Mucosa of descending colon (tissue), 3 donors: ENCODE measurements at regions of chr7 and their contacts with region 1.

Region 1: DNA sequence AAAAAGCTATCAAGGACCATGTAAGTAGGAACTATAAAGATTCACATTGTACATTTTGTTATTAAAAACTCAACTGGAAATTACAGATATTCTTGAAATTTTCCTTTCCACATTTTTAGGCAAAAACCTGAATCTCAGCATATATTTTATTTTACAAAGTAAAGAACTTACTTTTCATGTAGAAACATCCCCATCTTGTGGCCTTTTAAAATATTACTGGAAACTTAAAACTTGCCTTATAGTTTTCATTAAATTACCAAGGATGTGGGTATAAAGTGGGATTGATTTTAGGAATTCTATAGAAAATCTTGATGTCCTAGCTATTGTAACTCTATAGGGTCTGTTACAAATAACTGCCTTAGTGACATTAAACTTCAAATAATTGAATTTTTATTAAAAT is 10.6 kb downstream of the DBF4 start:
- DNase-seq: no peak
- ATAC-seq: no peak
- H3K4me3 ChIP-seq: no peak overlapping the region
- H3K4me1 ChIP-seq: no peaks in the 10 kb centered on the region
- CTCF ChIP-seq: no peak

Region 2: DNA sequence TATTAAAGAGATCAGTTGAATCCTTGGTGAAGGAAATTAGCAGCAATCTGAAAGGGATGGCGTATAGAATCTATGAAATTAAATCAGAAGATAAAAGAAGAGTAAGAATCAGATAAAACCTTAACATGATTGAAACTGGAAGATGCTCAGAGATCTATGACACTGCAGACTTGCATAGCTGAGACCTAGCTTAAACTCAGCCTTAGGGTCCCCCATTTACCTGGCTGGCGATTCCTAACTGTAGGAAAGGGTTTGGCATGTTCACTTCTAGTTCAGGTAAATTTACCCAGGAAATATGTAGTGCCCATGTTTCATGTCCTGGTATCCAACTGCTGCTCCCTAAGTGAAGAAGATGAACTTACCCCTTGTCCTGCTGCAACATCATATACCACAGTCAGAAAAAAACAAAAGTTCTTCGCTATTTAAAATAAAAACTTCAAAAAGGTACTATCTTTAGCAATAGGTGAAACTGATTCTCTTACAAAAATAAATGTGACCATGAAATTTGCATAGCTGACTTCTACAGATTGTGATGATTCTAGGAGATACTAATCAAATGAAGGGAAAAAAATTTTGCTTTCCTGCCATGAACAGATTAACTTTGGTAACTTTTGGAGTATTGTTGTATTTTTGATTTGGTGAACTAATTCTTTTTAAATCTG is 619.5 kb before region 1 on chr7:
- intact Hi-C with region 1: no loop called
- DNase-seq: no peak
- ATAC-seq: no peak
- H3K4me3 ChIP-seq: no peak overlapping the region
- H3K4me1 ChIP-seq: no peaks in the 10 kb centered on the region
- CTCF ChIP-seq: no peak

Region 3: GRCh38 chr7:87506246-87507180 is 380.4 kb before region 1 on chr7:
- intact Hi-C with region 1: loop called in 1 of 2 experiments (anchors 10 kb)
- DNase-seq: no peak
- ATAC-seq: no peak
- H3K4me3 ChIP-seq: no peak overlapping the region
- H3K4me1 ChIP-seq: no peaks in the 10 kb centered on the region
- CTCF ChIP-seq: no peak

Region 4: GRCh38 chr7:87615197-87615596 is 271.7 kb before region 1 on chr7:
- intact Hi-C with region 1: no loop called
- DNase-seq: no peak
- ATAC-seq: no peak
- H3K4me3 ChIP-seq: no peak overlapping the region
- H3K4me1 ChIP-seq: no peaks in the 10 kb centered on the region
- CTCF ChIP-seq: no peak

Region 5: DNA sequence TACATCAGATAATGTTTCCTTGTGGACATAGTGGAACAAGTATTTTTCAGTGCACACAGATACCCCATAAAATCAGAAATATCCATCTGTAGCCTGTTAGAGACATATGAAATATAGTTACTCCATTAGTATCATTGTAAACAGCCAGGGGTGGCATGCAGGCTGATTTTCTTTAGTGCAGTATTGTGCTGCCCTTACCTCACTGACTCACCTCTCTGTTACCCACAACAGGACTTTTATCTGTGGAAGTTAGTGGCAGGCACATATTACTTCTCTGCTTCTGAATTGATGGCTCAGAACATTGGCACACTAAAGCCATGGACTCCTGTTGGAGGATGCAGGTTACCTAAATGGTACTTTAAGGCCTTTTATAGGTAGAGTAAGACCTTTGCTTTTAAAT is 80.7 kb before region 1 on chr7:
- intact Hi-C with region 1: loop called in 1 of 2 experiments (anchors 10 kb)
- DNase-seq: no peak
- ATAC-seq: no peak
- H3K4me3 ChIP-seq: no peak overlapping the region
- H3K4me1 ChIP-seq: no peaks in the 10 kb centered on the region
- CTCF ChIP-seq: no peak